GM12878 (cell line): ENCODE measurements at regions of chr13 and their contacts with region 1.

Region 1: DNA sequence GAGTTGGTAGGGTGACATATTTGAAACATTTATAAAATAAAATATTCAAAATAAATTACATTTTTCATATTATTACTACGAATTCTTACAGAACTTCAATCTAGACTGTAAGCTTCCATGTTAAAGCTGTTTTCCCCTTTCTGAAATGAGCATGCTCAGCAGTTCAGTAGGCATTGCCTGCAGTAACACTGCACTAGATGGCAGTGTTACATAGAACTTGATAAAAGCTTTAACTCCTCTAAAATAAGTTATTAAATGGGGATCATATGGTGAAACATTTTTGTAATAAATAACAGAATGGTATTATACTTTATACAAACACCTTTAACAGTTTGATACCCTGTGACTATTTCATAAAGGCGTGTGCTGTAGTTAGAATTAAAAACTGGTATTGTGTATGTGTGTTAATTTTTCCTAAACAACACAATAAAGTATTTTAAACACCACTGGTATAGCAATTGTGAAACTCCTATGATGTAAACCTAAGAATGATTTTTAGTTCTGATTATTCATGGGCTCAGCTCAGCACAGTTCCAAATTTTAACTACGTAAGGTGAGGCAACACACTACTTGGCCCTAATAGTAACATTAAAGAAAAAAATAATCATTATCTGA is 11.6 kb upstream of the GPR18 start:
- DNase-seq: no peak
- ATAC-seq: peak; percentile 89
- H3K4me3 ChIP-seq: no peak overlapping the region
- H3K27ac ChIP-seq: peak overlapping the region; percentile 37; the same call in 1 of the 2 replicates
- H3K4me1 ChIP-seq: peaks cover 24% of the 10 kb centered on the region
- H3K27me3 ChIP-seq: no peaks in the 10 kb centered on the region
- CTCF ChIP-seq: peak; percentile 74 to 85 (median 81)
- EP300 ChIP-seq: no peak
- POLR2A ChIP-seq: no peak
- RAD21 ChIP-seq: peak; percentile 91

Region 2: DNA sequence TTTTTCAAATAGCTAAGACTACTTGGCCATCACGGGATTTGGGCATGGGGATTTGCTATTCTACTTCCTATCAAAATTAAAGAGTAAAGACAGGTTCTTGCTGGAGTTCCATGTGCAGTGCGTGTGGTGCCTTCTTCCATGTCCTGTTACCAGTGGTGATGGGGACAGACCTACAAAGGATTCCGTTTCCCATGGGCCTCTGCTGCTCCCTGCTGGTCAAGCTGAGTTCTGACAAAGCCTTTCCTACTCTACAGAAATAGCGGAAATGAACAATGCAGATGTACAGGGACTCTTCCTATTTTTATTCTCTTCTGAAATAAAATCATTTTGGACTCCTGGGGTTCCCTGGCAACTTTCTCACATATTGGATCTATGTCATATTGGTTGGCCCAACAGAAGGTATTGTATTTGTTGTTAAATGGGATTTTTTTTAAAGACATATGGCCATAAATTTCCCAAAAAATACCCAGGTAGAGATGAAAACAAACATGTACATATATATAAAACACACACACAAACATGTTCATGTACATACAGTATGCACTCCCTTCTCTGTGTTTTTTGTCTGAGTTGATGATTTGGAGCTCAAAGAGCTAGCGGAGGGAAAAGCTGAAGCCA is 426.8 kb before region 1 on chr13:
- CTCF ChIA-PET with region 1: interaction called, 7 read pairs
- POLR2A ChIA-PET with region 1: no interaction called
- RAD21 ChIA-PET with region 1: no interaction called
- SMC1A ChIA-PET with region 1: interaction called, 6 read pairs
- in situ Hi-C with region 1: no loop called
- intact Hi-C with region 1: loop called (anchors 5 kb)
- DNase-seq: peak; percentile 38
- ATAC-seq: peak; percentile 93
- H3K4me3 ChIP-seq: no peak overlapping the region
- H3K27ac ChIP-seq: no peak overlapping the region
- H3K4me1 ChIP-seq: no peaks in the 10 kb centered on the region
- H3K27me3 ChIP-seq: no peaks in the 10 kb centered on the region
- CTCF ChIP-seq: peak; percentile 86 to 95 (median 89)
- EP300 ChIP-seq: no peak
- POLR2A ChIP-seq: no peak
- RAD21 ChIP-seq: peak; percentile 83

Region 3: GRCh38 chr13:99185606-99186005 is 84.1 kb before region 1 on chr13:
- CTCF ChIA-PET with region 1: interaction called, 470 read pairs
- POLR2A ChIA-PET with region 1: no interaction called
- RAD21 ChIA-PET with region 1: interaction called, 338 read pairs
- SMC1A ChIA-PET with region 1: interaction called, 269 read pairs
- in situ Hi-C with region 1: no loop called
- intact Hi-C with region 1: no loop called
- DNase-seq: no peak
- ATAC-seq: no peak
- H3K4me3 ChIP-seq: no peak overlapping the region
- H3K27ac ChIP-seq: no peak overlapping the region
- H3K4me1 ChIP-seq: no peaks in the 10 kb centered on the region
- H3K27me3 ChIP-seq: no peaks in the 10 kb centered on the region; a peak in 1 of 4 replicates
- CTCF ChIP-seq: no peak
- EP300 ChIP-seq: no peak
- POLR2A ChIP-seq: no peak
- RAD21 ChIP-seq: no peak

Region 4: DNA sequence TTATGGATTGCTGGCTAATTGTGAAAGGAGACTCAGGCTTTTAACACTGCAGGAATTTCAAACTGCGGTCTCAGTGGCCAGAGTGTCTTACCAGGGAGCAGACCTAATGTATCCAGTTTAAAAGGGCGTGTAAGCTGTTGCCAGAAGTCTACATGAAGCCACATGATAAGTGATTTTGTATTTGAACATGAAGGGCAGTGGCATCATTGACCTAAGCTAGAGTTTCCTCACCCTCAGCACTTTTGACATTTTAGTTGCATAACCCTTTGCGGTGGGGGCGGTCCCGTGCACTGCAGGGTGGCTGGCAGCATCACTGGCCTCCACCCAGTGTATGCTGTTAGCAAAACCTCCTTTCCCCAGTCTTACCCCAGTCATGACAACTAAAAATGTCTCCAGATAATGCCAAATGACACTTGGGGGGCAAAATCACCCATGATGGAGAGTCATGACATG is 12.1 kb after region 1 on chr13:
- CTCF ChIA-PET with region 1: interaction called, 54 read pairs
- POLR2A ChIA-PET with region 1: interaction called, 6 read pairs
- RAD21 ChIA-PET with region 1: interaction called, 106 read pairs
- SMC1A ChIA-PET with region 1: interaction called, 132 read pairs
- in situ Hi-C with region 1: no loop called
- intact Hi-C with region 1: no loop called
- DNase-seq: no peak
- ATAC-seq: peak; percentile 89
- H3K4me3 ChIP-seq: peak overlapping the region; percentile 8
- H3K27ac ChIP-seq: peak overlapping the region; percentile 79
- H3K4me1 ChIP-seq: peaks cover 53% of the 10 kb centered on the region
- H3K27me3 ChIP-seq: no peaks in the 10 kb centered on the region
- CTCF ChIP-seq: no peak
- EP300 ChIP-seq: no peak
- POLR2A ChIP-seq: no peak
- RAD21 ChIP-seq: no peak

Region 5: DNA sequence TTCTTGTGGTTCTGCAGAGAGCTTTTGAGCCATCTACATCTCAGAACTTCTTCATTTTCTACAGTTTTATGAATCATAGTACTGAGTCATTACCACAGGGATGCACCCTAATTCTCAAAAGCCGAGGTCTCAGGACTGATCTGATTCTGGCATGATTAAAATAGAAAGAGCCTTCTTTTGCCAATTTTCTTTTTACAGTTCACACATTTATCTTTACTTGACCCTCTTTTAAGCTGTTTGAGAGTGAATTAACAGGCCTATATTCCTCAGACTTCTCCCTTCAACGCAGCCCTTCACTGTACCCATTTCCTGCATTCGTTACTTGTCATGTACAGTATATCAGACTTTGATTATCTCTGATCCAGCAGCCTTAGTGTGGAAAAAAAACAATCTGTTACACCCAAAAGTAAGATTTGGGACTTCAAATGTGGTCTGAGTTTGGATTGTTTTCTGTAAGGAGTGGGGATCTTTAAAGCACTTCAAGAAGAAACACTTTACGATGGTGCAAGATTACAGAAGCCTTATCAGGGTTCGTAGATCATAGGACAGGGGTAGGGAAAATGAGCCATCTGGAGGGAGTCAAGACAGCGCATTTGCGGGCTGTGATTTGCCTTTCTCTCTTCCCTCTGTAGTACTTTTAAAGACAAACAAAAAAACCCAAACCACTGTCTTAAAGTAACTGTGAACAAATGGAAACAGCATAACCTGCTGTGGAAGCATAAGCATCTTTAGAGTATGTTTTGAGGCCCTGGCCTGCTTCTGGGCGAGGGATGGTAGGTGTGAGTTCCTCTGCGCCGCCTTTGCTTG is 52.8 kb after region 1 on chr13:
- CTCF ChIA-PET with region 1: interaction called, 14 read pairs
- POLR2A ChIA-PET with region 1: interaction called, 12 read pairs
- RAD21 ChIA-PET with region 1: interaction called, 8 read pairs
- SMC1A ChIA-PET with region 1: interaction called, 22 read pairs
- in situ Hi-C with region 1: no loop called
- intact Hi-C with region 1: no loop called
- DNase-seq: peak; percentile 85
- ATAC-seq: peak; percentile 92
- H3K4me3 ChIP-seq: peak overlapping the region; percentile 49
- H3K27ac ChIP-seq: peak overlapping the region; percentile 85
- H3K4me1 ChIP-seq: peaks cover 53% of the 10 kb centered on the region
- H3K27me3 ChIP-seq: no peaks in the 10 kb centered on the region
- CTCF ChIP-seq: no peak
- EP300 ChIP-seq: peak; percentile 55 to 84; a peak in 2 of 4 replicates
- POLR2A ChIP-seq: no peak
- RAD21 ChIP-seq: peak; percentile 21; the same call in 1 of the 2 replicates

Region 6: GRCh38 chr13:99374994-99375737 is 105.4 kb after region 1 on chr13:
- CTCF ChIA-PET with region 1: interaction called, 440 read pairs
- POLR2A ChIA-PET with region 1: interaction called, 9 read pairs
- RAD21 ChIA-PET with region 1: interaction called, 182 read pairs
- SMC1A ChIA-PET with region 1: interaction called, 10 read pairs
- in situ Hi-C with region 1: no loop called
- intact Hi-C with region 1: no loop called
- DNase-seq: no peak
- ATAC-seq: peak; percentile 83
- H3K4me3 ChIP-seq: peak overlapping the region; percentile 33; the same call in 1 of the 2 replicates
- H3K27ac ChIP-seq: peak overlapping the region; percentile 94
- H3K4me1 ChIP-seq: peaks cover 66% of the 10 kb centered on the region
- H3K27me3 ChIP-seq: no peaks in the 10 kb centered on the region
- CTCF ChIP-seq: 0 out of 6 replicates have a peak, but pooled peaks of 1 of the 3 experiments have one; percentile 0
- EP300 ChIP-seq: peak; percentile 85 to 91; a peak in 3 of 4 replicates
- POLR2A ChIP-seq: 0 out of 2 replicates have a peak, but pooled peaks have one; percentile 24
- RAD21 ChIP-seq: no peak

Region 7: DNA sequence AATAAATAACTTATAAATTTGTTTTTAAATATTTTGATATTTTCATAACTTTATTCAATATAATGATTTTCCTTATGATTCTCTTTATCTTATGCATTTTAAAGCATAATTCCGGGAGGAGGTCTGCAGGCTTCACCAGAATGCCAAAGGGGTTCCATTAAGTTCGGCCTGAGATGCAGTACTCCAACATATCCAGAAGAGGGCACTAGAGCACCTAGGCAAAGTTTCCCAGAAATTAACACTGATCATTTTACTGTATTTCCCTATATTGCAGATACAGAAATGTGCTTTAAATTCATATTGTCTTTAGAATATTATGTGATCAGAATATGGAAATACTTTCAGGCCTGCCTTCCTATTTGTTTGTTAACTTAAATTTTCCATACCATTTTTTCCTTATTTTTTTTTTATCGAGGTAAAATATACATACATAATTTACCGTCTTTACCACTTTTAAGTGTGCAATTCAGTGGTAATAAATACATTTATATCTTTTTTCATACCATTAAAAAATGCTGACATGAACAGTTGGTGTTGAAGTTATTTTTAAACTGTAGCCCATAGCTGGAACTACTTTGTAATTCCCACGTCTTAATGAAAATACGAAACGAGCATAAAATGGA is 172.7 kb after region 1 on chr13:
- CTCF ChIA-PET with region 1: interaction called, 427 read pairs
- POLR2A ChIA-PET with region 1: interaction called, 24 read pairs
- RAD21 ChIA-PET with region 1: interaction called, 293 read pairs
- SMC1A ChIA-PET with region 1: interaction called, 300 read pairs
- in situ Hi-C with region 1: loop called (anchors 5 kb)
- intact Hi-C with region 1: loop called (anchors 1 kb)
- DNase-seq: no peak
- ATAC-seq: peak; percentile 77
- H3K4me3 ChIP-seq: no peak overlapping the region
- H3K27ac ChIP-seq: no peak overlapping the region
- H3K4me1 ChIP-seq: 0 out of 2 replicates have a peak, but pooled peaks cover 2% of the 10 kb centered on the region
- H3K27me3 ChIP-seq: peaks cover 2 to 4% of the 10 kb centered on the region in 2 experiments; a peak in 2 of 4 replicates
- CTCF ChIP-seq: peak; percentile 81 to 93 (median 88)
- EP300 ChIP-seq: no peak
- POLR2A ChIP-seq: no peak
- RAD21 ChIP-seq: peak; percentile 96